ENCODE measurements at regions of chr7 and their contacts with region 1.

Region 1: GRCh38 chr7:57165285-57165899 is 33.2 kb upstream of the ZNF479 start:
- DNase-seq: no peak
- H3K4me3 ChIP-seq: no peak overlapping the region
- H3K27ac ChIP-seq: no peak overlapping the region
- H3K4me1 ChIP-seq: no peaks in the 10 kb centered on the region
- H3K27me3 ChIP-seq: no peaks in the 10 kb centered on the region
- CTCF ChIP-seq: no peak
- POLR2A ChIP-seq: no peak

Region 2: DNA sequence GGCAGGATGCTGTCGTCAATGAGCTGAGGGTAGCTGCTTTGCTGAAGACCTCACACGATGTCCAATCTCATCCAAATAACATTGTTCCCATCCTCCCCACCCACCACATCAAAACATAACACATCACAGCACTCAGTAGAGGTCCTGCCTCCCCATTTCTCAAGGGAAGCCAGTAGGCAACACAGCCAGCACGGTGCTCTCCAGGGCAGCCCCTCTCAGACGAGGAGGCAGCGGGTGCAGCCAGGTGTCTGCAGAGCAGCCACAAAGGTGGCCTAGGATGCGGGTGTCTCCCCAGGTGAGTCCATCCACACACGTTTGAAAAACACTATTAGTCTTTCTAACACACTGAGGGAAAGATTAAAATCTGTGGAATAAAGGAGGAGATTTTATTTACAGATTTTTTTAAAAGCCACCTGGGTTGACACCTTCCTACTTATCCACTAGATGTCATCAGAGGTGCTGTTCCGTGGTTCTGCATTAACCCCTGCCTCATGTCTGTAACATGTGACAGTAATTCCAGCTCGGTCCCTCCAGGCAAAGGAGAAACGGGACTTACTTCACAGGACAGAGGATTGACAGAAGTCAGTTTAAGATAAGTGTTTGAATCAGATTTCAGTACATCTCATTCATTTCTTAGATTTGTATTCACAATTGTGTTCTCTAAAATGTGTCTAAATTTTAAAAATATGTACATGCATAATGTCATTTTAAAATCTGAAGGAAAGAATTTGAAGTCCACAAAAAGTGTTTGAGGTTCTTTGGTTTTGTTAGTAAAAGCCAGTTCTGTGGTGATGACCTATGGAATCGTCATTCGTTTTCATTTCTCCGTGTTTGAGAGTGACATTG is 1732.2 kb before region 1 on chr7:
- intact Hi-C with region 1: no loop called
- DNase-seq: no peak
- H3K4me3 ChIP-seq: no peak overlapping the region
- H3K27ac ChIP-seq: no peak overlapping the region
- H3K4me1 ChIP-seq: peaks cover 13% of the 10 kb centered on the region
- H3K27me3 ChIP-seq: no peaks in the 10 kb centered on the region
- CTCF ChIP-seq: no peak
- POLR2A ChIP-seq: no peak

Region 3: GRCh38 chr7:57179776-57180415 is 14.5 kb after region 1 on chr7:
- intact Hi-C with region 1: no loop called
- DNase-seq: no peak
- H3K4me3 ChIP-seq: no peak overlapping the region
- H3K27ac ChIP-seq: no peak overlapping the region
- H3K4me1 ChIP-seq: no peaks in the 10 kb centered on the region
- H3K27me3 ChIP-seq: no peaks in the 10 kb centered on the region
- CTCF ChIP-seq: no peak
- POLR2A ChIP-seq: no peak

Region 4: DNA sequence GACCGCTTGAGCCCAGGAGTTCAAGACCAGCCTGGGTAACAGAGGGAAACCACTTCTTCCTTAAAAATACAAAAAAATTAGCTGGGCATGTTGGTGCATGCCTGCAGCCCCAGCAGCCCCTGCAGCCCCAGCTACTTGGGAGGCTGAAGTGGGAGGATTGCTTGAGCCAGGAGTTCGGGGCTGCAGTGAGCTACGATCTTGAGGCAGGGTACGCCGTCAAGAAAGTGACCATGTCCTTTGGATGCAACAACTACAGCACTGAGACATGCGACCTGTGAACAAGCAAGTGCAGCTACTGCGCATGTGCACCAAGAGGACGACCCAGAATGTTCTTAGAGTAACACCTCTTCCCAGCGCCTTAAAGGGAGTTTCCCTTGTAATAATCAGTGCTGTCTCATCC is 33.4 kb after region 1 on chr7:
- intact Hi-C with region 1: loop called (anchors 1 kb)
- DNase-seq: peak in 1 of 2 donors; percentile 58
- H3K4me3 ChIP-seq: no peak overlapping the region
- H3K27ac ChIP-seq: no peak overlapping the region
- H3K4me1 ChIP-seq: no peaks in the 10 kb centered on the region
- H3K27me3 ChIP-seq: no peaks in the 10 kb centered on the region
- CTCF ChIP-seq: no peak
- POLR2A ChIP-seq: no peak

Measured in vagina (tissue), 2 donors.